Activated CD4-positive, alpha-beta memory T cell treated with anti-CD3 and anti-CD28 coated beads, Interleukin-2, amount 10 ng/mL, durations not matched to agents 7 days and 5 days (primary cell): ENCODE measurements at regions of chr10 and their contacts with region 1.

Region 1: DNA sequence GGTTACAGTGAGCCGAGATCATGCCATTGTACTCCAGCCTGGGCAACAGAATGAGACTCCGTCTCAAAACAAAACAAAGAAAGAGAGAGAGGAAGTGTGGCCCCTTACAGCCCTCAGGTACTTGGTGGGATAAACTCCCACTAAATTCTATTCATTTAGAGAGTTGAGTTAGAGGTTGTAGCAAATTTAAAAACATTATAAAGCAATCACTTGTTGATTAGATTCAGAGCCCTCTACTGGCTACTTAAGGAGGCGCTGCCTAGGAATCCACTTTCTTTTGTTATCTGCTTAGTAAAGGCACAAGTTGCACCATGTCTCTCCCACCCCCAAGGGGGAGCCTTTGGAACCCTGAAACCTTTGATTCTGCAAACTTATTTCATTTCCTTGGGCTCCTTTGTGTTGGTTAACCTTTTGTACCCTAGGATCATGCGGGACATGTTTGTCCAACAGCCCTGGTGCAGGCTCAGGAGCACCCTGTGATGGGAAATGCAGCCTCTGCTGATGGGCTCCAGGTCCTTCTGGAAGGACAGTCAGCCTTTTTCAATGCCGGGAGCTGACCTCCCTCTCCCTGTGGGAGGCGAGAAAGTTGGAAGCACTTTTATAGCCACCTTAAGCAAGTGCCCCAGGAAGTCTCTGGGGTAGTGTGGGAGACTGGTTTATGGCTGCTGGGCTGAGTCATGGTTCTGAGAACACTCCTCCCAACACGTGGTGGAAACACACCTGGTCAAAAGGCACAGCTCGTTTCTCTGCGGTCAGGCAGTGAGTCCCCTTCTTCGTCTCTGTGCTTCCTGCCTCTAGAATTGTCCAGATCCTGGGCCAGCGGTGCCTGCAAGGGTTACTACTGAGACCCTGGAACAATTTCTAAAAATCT is 2.3 kb downstream of the HKDC1 start:
- DNase-seq: peak; percentile 90
- H3K4me3 Mint-ChIP-seq: peak overlapping the region; percentile 58
- H3K27ac Mint-ChIP-seq: peak overlapping the region; percentile 88
- H3K4me1 Mint-ChIP-seq: peaks cover 67% of the 10 kb centered on the region
- H3K27me3 Mint-ChIP-seq: no peaks in the 10 kb centered on the region

Region 2: GRCh38 chr10:69179743-69180524 is 42.5 kb before region 1 on chr10 and contains the start of gene SUPV3L1:
- CTCF ChIA-PET with region 1: interaction called, 4 read pairs
- POLR2A ChIA-PET with region 1: interaction called, 12 read pairs
- DNase-seq: peak; percentile 87
- H3K4me3 Mint-ChIP-seq: peak within 1 kb of the TSS; percentile 92
- H3K27ac Mint-ChIP-seq: peak within 1 kb of the TSS; percentile 98
- H3K4me1 Mint-ChIP-seq: peaks cover 45% of the 10 kb centered on the region
- H3K27me3 Mint-ChIP-seq: no peaks in the 10 kb centered on the region
- total RNA-seq, gene SUPV3L1: 34.6 to 39.1 TPM

Region 3: DNA sequence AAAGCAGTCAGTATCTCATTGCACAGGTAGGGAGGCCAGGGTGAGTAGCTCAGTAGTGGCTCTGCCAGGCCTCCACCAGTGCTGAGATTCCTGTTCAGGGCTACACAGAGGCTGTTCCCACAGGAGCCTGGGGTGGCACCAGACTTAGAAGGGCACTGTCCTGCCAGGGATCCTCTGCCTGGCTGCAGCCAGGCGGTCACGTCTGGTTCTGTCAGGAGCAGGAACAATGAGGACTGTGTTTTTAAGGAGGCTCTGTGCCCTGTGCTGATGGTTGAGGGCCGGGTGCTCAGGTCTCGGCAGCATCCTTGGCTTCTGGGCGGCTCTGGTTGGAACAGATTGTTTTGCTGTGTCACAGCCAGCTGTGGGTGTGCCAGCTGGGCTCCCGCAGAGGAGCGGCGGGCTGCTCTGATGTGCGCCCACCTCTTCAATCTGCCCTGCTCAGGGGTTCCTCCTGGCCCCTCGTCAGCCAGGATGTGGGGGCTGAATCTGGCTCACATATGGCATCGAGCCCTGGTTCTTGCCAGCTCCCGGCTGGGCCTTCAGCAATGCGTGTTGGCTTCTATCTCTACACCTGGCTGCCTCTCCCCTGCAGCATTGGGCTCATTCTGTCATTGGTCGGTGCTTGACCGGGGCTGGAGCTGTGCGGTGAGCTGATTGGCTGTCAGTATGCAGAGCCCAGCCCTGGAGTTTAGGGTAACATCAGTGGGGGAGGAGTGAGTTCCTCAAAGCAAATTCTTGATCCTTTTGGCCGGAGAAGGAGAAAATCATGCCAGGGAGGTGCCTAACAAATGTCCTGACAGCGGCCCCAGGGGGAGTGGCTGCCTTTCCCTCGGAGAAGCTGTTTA is 153.1 kb after region 1 on chr10:
- CTCF ChIA-PET with region 1: no interaction called
- POLR2A ChIA-PET with region 1: no interaction called
- DNase-seq: no peak
- H3K4me3 Mint-ChIP-seq: no peak overlapping the region
- H3K27ac Mint-ChIP-seq: no peak overlapping the region
- H3K4me1 Mint-ChIP-seq: peaks cover 6% of the 10 kb centered on the region
- H3K27me3 Mint-ChIP-seq: no peaks in the 10 kb centered on the region